Endothelial cell of umbilical vein (primary cell): ENCODE measurements at regions of chr11 and their contacts with region 1.

Region 1: DNA sequence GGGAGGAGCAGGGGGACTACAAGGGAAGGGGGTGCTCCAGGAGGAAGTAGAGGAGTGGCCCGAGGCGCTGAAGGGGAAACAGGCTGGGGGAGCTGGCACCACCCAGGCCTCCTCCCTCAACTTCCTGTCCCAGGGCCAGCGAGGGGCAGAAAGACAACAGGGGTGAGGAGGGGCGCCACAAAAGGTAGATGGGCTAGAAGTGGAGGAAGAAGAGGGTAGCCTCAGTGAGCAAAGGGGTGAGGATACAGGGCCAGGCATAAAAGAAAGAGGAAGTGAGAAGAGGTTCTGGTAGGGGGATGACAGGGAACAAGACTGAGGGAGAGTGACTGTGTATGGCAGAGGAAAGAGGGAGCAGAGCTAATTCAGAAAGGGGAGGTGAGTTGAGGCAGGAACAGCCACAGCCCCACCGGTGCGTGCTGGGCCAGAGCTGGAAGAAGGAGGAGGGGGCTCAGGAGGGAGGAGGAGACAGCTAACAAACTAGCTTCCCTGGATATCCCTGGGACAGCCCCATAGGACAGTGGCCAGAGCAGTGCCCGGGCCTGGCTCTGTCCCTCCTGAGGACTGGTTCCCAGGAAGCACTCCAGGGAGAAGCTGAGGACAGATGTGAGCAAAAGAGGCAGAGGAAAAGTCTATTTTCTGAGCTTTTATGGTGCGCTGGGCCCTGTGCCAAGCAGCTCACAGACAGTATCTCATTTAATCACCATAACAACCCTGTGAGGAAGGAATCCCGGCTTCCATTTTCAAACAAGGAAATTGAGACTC is 8.5 kb downstream of the DCHS1 start:
- DNase-seq: peak; percentile 67
- H3K4me3 ChIP-seq: no peak overlapping the region
- H3K27ac ChIP-seq: peak overlapping the region; percentile 84
- H3K4me1 ChIP-seq: peaks cover 37% of the 10 kb centered on the region
- H3K27me3 ChIP-seq: no peaks in the 10 kb centered on the region
- CTCF ChIP-seq: no peak
- POLR2A ChIP-seq: no peak

Region 2: DNA sequence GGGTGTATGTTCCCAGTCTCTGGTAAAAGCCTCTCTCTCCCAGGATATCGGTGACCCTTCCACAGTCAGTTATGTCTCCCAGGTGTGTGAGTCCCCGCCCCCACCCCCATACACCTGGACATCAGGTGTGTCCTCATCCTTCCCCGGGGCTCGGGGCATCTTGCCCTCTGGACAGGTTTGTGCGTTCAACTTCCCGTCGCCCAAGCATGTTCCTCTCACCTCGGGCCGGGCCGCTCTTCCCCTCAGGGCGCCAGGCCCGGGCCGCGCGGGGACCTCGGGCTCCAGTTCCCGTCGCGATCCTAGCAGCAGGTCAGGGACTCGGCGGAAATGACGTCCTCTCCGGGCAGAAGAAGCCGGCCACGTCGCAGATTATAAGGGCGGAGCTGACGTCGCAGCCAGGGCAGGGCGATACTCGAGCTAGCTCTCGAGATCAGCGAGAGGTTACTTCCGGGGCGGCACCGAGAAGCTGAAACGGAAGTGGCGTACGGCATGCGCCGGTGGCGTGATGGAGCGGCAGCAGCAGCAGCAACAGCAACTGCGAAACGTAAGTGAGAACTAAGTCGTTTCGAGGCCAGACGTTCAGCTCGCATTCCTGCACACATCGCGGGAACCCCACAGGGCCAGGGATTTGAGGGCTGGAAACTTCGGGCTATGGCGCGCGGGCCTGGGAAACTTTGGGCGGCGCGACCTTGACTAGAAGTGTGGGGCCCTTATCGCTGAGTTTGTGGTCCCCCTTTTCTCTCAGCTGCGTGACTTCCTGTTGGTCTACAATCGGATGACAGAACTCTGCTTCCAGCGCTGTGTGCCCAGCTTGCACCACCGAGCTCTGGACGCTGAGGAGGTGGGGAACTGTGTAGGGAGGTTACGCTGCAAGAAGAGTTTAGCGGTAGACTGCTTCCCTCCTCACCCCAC is 165.8 kb before region 1 on chr11 and contains the starts of genes ARFIP2 and TIMM10B:
- CTCF ChIA-PET with region 1: no interaction called
- POLR2A ChIA-PET with region 1: no interaction called
- dilution Hi-C with region 1: no loop called
- intact Hi-C with region 1: no loop called
- DNase-seq: peak; percentile 98
- H3K4me3 ChIP-seq: peak within 1 kb of the TSS; percentile 19 to 65 (median 57)
- H3K27ac ChIP-seq: peak within 1 kb of the TSS; percentile 72
- H3K4me1 ChIP-seq: peaks cover 18% of the 10 kb centered on the region
- H3K27me3 ChIP-seq: no peaks in the 10 kb centered on the region
- CTCF ChIP-seq: no peak
- POLR2A ChIP-seq: peak; percentile 70
- total RNA-seq, gene ARFIP2: 46.7 and 48.4 TPM in 2 replicates
- total RNA-seq, gene TIMM10B: 29.2 and 31.3 TPM in 2 replicates

Region 3: GRCh38 chr11:6601041-6601461 is 46.0 kb before region 1 on chr11:
- CTCF ChIA-PET with region 1: no interaction called
- POLR2A ChIA-PET with region 1: no interaction called
- dilution Hi-C with region 1: no loop called
- intact Hi-C with region 1: no loop called
- DNase-seq: no peak
- H3K4me3 ChIP-seq: no peak overlapping the region
- H3K27ac ChIP-seq: no peak overlapping the region
- H3K4me1 ChIP-seq: peaks cover 21% of the 10 kb centered on the region
- H3K27me3 ChIP-seq: no peaks in the 10 kb centered on the region
- CTCF ChIP-seq: no peak
- POLR2A ChIP-seq: no peak

Region 4: DNA sequence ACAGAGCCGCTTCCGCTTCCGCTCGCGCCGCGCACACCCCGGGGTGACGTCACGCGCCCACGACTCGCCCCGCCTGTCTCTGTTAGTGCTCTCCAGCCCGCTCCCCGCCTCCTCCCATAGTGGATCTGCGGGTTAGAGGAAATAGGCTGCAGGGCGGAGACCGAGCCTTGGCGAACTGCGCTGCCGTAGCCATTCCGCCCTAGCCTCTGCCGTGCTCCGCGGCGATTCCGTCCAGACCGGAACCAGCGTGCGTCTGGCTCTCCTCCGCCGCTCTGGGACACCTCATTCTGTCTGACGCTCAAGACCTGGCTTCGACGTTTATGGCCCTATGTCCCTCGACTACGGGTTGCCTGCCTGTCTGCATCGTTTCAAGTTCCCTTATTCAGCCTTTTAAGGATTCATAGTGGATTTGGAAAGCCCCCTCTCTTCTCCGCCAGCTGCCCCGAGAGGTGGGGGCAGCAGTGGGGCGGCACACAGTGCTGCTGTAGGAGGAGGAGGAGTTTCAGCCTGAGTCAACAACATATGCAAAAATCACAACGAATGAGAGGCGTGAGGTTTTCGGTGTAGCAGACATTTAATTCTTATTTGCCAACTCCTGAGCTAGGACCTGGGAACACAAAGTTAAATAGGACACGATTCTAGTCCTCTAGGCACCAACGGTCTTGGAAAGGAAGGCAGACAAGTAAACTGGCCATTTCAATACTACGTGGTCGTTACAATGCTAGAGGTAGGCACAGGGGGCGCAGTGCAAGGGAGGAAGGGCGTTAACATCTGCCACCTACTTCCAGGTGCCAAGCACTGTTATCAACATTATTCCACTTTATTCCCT is 34.7 kb before region 1 on chr11 and contains the start of gene TAF10:
- CTCF ChIA-PET with region 1: interaction called, 3 read pairs
- POLR2A ChIA-PET with region 1: no interaction called
- dilution Hi-C with region 1: no loop called
- intact Hi-C with region 1: loop called (anchors 1 kb)
- DNase-seq: peak; percentile 97
- H3K4me3 ChIP-seq: peak within 1 kb of the TSS; percentile 28 to 72 (median 71)
- H3K27ac ChIP-seq: peak within 1 kb of the TSS; percentile 89
- H3K4me1 ChIP-seq: peaks cover 57% of the 10 kb centered on the region
- H3K27me3 ChIP-seq: no peaks in the 10 kb centered on the region
- CTCF ChIP-seq: peak; percentile 41 to 49
- POLR2A ChIP-seq: peak; percentile 92
- total RNA-seq, gene TAF10: 86.2 and 105 TPM in 2 replicates

Region 5: DNA sequence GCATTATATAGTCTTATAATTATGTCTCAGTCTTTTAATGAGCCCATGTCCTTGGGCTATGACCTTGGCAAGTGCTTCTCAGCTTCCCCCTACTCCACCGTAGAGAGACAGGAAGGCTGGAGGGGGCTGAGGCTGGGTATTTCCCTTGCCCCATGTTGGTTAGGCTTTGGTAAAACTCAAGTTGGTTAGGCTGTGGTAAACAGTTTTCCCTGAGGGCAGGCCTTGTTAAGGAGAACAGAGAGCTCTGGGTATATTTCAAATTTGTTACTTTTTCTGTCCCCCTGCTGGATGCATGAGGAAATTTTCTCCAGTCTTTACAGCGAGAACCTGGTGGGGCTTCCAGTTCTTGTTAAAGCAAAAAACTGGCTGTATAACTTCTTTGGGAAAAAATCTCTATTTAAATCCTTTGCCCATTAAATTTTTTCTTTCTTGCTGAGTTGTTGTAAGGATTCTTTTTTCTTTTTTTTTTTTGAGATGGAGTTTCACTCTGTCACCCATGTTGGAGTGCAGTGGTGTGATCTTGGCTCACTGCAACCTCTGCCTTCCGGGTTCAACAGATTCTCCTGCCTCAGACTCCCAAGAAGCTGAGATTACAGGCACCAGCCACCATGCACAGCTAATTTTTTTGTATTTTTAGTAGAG is 20.8 kb after region 1 on chr11:
- CTCF ChIA-PET with region 1: interaction called, 19 read pairs
- POLR2A ChIA-PET with region 1: no interaction called
- dilution Hi-C with region 1: no loop called
- intact Hi-C with region 1: loop called (anchors 1 kb)
- DNase-seq: peak; percentile 34
- H3K4me3 ChIP-seq: no peak overlapping the region
- H3K27ac ChIP-seq: no peak overlapping the region
- H3K4me1 ChIP-seq: no peaks in the 10 kb centered on the region
- H3K27me3 ChIP-seq: no peaks in the 10 kb centered on the region
- CTCF ChIP-seq: peak; percentile 39 to 53
- POLR2A ChIP-seq: no peak

Region 6: DNA sequence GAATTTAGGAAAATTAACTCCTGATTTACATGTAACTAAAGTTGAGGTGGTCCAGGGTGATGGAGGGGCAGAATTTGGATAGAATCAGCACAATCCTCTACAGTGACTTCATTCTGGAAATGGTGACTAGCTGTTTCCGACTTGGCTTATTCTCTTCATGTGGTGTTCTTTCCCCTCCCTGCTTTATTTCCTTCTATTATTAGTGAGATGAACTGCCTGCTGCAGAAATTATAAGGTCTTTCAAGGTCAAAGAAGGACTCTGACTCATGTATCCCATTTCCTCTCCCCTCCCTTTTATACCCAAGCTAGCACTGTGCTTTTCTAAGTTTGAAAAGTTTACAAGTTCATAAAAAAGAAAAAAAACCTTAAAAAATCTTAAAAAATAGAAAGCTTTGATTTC is 48.3 kb after region 1 on chr11:
- CTCF ChIA-PET with region 1: interaction called, 3 read pairs
- POLR2A ChIA-PET with region 1: no interaction called
- dilution Hi-C with region 1: no loop called
- intact Hi-C with region 1: loop called (anchors 1 kb)
- DNase-seq: peak; percentile 95
- H3K4me3 ChIP-seq: peak overlapping the region in 1 of 3 experiments; percentile 6
- H3K27ac ChIP-seq: peak overlapping the region; percentile 88
- H3K4me1 ChIP-seq: peaks cover 31% of the 10 kb centered on the region
- H3K27me3 ChIP-seq: no peaks in the 10 kb centered on the region
- CTCF ChIP-seq: no peak
- POLR2A ChIP-seq: no peak